Thyroid gland (tissue), 4 donors: ENCODE measurements at regions of chr7 and their contacts with region 1.

Region 1: GRCh38 chr7:129163875-129164544 is 19.5 kb downstream of the TSPAN33 start:
- DNase-seq: no peak
- H3K4me3 ChIP-seq: no peak overlapping the region
- H3K27ac ChIP-seq: no peak overlapping the region
- H3K4me1 ChIP-seq: peaks cover 20 to 23% of the 10 kb centered on the region in 2 donors
- H3K27me3 ChIP-seq: no peaks in the 10 kb centered on the region
- CTCF ChIP-seq: peak; percentile 54 to 83 (median 73)
- POLR2A ChIP-seq: no peak

Region 2: DNA sequence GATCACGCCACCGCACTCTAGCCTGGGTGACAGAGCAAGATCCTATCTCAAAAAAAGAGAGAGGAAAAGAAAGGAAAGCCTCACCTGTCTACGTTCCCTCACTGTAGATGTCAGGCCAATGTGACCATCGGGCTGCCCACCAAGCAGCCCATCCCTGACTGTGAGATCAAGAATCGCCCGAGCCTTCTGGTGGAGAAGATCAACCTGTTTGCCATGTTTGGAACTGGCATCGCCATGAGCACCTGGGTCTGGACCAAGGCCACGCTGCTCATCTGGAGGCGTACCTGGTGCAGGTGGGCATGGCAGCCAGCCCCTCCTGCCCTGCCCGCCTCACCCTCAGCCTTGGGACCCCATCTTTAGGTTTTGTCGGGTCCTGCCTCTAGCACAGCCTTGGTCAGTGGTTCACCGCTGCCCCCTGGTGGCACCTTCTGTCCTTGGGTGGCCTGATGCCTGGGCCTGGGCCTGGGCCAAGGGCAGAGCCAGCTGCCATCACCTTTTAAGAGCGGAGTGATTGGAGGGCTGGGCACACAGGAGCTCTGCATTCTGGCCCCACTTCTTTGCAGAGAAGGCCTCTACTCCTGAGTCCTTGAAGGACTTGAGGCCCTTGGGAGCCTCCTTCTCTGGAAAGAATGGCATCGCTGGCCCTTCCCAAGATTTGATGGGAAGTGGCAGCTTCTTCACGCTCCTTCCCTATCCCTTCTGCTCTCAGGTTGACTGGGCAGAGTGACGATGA is 46.4 kb after region 1 on chr7:
- intact Hi-C with region 1: loop called (anchors 5 kb)
- DNase-seq: peak; percentile 84 to 87
- H3K4me3 ChIP-seq: no peak overlapping the region
- H3K27ac ChIP-seq: no peak overlapping the region
- H3K4me1 ChIP-seq: peaks cover 0 to under 1% of the 10 kb centered on the region in 2 donors
- H3K27me3 ChIP-seq: no peaks in the 10 kb centered on the region
- CTCF ChIP-seq: peak; percentile 54 to 93 (median 86)
- POLR2A ChIP-seq: no peak